AG04449 (cell line): ENCODE measurements at regions of chr9 and their contacts with region 1.

Region 1: DNA sequence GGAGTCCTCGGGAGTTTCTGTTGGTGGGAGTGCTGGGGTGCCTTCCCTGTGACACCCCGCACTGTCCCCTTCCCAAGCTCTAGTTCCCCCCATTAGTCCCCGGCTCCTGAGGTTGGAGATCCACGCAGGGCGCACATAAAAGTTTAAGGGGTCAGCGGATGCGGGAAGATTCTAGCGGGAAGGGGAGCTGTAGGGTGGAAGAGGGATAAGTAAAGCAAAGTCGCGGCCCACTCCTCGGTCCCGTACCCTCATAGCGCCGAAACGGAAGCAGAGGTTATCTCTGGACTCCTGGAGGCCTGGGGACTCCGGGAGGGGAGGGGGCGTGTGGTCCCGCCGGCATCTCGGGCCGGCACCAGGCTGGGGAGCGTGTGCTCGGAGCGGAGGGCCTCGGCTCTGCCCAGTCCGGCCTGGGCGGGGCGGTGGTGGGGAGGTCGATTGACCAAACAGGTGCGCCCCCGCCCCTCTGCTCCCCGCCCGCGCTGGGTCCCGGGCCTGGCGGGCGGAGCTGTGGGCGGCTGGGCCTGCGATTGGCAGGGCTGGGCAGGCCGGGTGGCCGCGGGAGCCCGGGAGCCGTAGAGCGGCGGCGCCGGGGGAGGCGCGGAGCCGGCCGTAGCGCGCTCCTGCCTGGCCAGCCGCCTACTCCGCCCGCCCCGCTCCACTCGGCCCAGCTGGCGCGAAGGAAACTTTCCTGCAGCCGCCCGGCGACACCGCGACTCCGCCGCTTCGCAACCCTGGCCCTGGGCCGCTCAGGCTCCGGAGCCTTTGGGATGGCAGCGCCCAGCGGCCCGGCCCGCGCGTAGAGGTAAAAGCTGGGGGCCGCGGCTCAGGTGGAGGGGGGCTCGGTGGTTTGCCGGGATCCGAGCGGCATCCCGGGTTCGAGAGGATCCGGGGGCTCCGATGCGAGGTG is 52.2 kb upstream of the DAB2IP start:
- DNase-seq: no peak
- H3K4me3 ChIP-seq: peak overlapping the region; percentile 57
- CTCF ChIP-seq: no peak

Region 2: GRCh38 chr9:121499427-121500164 is 99.6 kb before region 1 on chr9 and contains the start of gene GGTA1:
- CTCF ChIA-PET with region 1: no interaction called
- POLR2A ChIA-PET with region 1: no interaction called
- DNase-seq: no peak
- H3K4me3 ChIP-seq: peak within 1 kb of the TSS; percentile 49
- CTCF ChIP-seq: no peak

Region 3: GRCh38 chr9:121557581-121558447 is 41.4 kb before region 1 on chr9:
- CTCF ChIA-PET with region 1: interaction called, 21 read pairs
- POLR2A ChIA-PET with region 1: interaction called, 6 read pairs
- DNase-seq: peak; percentile 76
- H3K4me3 ChIP-seq: peak overlapping the region; percentile 18
- CTCF ChIP-seq: no peak

Region 4: GRCh38 chr9:121581786-121582600 is 17.2 kb before region 1 on chr9:
- CTCF ChIA-PET with region 1: interaction called, 41 read pairs
- POLR2A ChIA-PET with region 1: no interaction called
- DNase-seq: no peak
- H3K4me3 ChIP-seq: no peak overlapping the region
- CTCF ChIP-seq: no peak

Region 5: GRCh38 chr9:121609845-121610570 is 10.8 kb after region 1 on chr9:
- CTCF ChIA-PET with region 1: interaction called, 10 read pairs
- POLR2A ChIA-PET with region 1: no interaction called
- DNase-seq: peak; percentile 36
- H3K4me3 ChIP-seq: no peak overlapping the region
- CTCF ChIP-seq: no peak

Region 6: GRCh38 chr9:121621113-121621449 is 21.9 kb after region 1 on chr9:
- CTCF ChIA-PET with region 1: interaction called, 34 read pairs
- POLR2A ChIA-PET with region 1: no interaction called
- DNase-seq: no peak
- H3K4me3 ChIP-seq: no peak overlapping the region
- CTCF ChIP-seq: peak; percentile 64

Region 7: GRCh38 chr9:121765021-121765950 is 166.1 kb after region 1 on chr9:
- CTCF ChIA-PET with region 1: no interaction called
- POLR2A ChIA-PET with region 1: no interaction called
- DNase-seq: no peak
- H3K4me3 ChIP-seq: no peak overlapping the region
- CTCF ChIP-seq: no peak

Region 8: DNA sequence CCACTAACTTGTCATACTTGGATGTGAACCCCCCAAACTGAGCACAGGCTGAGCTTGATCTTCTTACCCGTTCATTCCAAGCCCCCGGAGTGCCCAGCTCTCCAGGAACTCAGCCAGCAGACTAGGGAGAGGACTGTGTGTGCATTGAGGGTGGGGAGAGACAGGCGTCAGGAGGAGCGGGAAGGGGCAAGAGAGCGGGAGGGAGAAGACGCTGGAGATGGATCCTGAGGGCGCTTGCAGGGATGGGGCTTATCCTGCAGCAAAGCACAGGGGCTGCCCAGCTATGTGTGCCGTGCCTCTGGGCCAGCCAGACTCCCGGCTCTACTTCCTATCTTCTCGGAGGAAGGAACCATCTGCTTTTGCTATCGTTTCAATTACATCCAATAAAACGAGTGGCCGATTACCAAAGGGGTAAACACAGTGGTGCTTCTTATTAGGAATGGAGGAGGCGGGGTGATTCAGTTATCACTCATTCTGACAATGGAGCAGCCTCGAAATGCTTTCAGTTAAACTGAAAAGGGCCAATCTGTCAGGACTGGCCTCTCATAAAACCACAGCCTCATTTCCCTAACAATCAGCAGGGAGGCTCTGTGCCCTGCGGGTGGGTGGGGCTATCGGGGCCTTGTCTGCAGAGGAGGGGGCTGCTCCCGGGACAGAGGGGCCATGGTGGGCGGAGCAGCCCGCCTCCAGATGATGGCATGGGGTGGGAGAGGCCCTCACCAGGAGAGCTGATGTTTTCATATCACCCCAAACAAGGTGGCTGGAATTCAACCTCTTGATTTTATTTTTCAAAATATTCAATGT is 220.4 kb after region 1 on chr9:
- CTCF ChIA-PET with region 1: no interaction called
- POLR2A ChIA-PET with region 1: no interaction called
- DNase-seq: no peak
- H3K4me3 ChIP-seq: peak overlapping the region; percentile 29
- CTCF ChIP-seq: no peak